Esophagus squamous epithelium (tissue), 5 donors: ENCODE measurements at regions of chr3 and their contacts with region 1.

Region 1: GRCh38 chr3:183385698-183386613 is 42.5 kb downstream of the MCF2L2 start:
- DNase-seq: no peak
- H3K4me3 ChIP-seq: no peak overlapping the region
- H3K27ac ChIP-seq: peak overlapping the region in 1 of 4 donors; percentile 31
- H3K4me1 ChIP-seq: peaks cover 0 to 7% (median 5%) of the 10 kb centered on the region in 3 donors
- H3K27me3 ChIP-seq: no peaks in the 10 kb centered on the region
- CTCF ChIP-seq: peak; percentile 40 to 84 (median 72)
- POLR2A ChIP-seq: no peak

Region 2: DNA sequence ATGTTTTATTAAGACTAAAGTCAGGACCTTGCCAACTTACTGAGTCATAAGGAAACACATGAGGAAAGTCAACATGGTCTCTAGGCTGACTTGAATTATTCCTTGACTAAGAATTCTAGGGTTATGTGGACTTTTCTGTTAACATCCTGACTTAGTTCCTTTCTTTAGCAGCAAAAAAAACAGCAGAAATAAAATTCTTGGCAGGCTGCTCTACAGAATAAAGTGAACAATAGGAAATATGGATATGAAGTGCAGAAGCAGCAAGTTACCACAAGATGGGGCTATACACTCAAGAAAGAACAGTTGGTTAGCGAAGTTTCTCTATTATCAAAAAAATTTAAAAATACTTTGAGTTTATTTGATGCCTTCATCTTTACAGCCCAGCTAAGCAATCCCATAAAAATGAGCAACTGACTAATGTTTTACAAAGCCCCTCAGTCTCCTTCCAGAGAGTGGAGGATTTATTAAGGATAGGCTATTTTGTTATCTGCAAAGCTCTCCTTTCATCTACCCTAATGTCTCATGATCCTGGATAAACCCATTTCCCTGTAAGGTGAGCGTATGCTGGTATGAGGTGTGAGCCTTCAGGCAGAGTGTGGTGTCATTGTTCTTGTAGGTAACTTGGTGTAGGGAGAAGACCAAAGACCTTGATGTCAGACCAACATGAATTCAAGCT is 263.6 kb before region 1 on chr3:
- intact Hi-C with region 1: loop called (anchors 5 kb)
- DNase-seq: no peak
- H3K4me3 ChIP-seq: no peak overlapping the region
- H3K27ac ChIP-seq: no peak overlapping the region
- H3K4me1 ChIP-seq: peaks cover 0 to 9% (median 0%) of the 10 kb centered on the region in 3 donors
- H3K27me3 ChIP-seq: peaks cover 0 to 10% (median 0%) of the 10 kb centered on the region in 4 donors
- CTCF ChIP-seq: peak; percentile 53 to 92 (median 84)
- POLR2A ChIP-seq: no peak

Region 3: GRCh38 chr3:183132409-183132808 is 253.5 kb before region 1 on chr3:
- intact Hi-C with region 1: no loop called
- DNase-seq: no peak
- H3K4me3 ChIP-seq: no peak overlapping the region
- H3K27ac ChIP-seq: no peak overlapping the region
- H3K4me1 ChIP-seq: no peaks in the 10 kb centered on the region
- H3K27me3 ChIP-seq: no peaks in the 10 kb centered on the region
- CTCF ChIP-seq: no peak
- POLR2A ChIP-seq: no peak

Region 4: GRCh38 chr3:183180105-183180783 is 205.7 kb before region 1 on chr3:
- intact Hi-C with region 1: loop called (anchors 5 kb)
- DNase-seq: no peak
- H3K4me3 ChIP-seq: peak overlapping the region in 2 of 4 donors; percentile 59 to 66
- H3K27ac ChIP-seq: no peak overlapping the region
- H3K4me1 ChIP-seq: peaks cover 18 to 31% (median 21%) of the 10 kb centered on the region in 3 donors
- H3K27me3 ChIP-seq: peaks cover 0 to 67% (median 0%) of the 10 kb centered on the region in 4 donors
- CTCF ChIP-seq: no peak
- POLR2A ChIP-seq: no peak